Upper lobe of right lung (tissue), 1 donor: ENCODE measurements at regions of chr19 and their contacts with region 1.

Region 1: DNA sequence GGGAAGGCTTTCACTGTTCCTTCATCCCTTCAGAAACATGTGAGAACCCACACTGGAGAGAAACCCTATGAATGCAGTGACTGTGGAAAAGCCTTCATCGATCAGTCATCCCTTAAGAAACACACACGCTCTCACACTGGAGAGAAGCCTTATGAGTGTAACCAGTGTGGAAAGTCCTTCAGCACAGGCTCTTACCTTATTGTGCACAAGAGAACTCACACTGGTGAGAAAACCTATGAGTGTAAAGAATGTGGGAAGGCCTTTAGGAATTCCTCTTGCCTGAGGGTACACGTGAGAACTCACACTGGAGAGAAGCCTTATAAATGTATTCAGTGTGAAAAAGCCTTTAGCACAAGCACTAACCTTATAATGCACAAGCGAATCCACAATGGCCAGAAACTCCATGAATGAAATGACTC is 18.6 kb downstream of the ZNF177 start:
- DNase-seq: no peak
- ATAC-seq: no peak
- H3K4me3 ChIP-seq: no peak overlapping the region
- H3K27ac ChIP-seq: no peak overlapping the region
- H3K4me1 ChIP-seq: no peaks in the 10 kb centered on the region
- H3K27me3 ChIP-seq: no peaks in the 10 kb centered on the region
- CTCF ChIP-seq: no peak

Region 2: DNA sequence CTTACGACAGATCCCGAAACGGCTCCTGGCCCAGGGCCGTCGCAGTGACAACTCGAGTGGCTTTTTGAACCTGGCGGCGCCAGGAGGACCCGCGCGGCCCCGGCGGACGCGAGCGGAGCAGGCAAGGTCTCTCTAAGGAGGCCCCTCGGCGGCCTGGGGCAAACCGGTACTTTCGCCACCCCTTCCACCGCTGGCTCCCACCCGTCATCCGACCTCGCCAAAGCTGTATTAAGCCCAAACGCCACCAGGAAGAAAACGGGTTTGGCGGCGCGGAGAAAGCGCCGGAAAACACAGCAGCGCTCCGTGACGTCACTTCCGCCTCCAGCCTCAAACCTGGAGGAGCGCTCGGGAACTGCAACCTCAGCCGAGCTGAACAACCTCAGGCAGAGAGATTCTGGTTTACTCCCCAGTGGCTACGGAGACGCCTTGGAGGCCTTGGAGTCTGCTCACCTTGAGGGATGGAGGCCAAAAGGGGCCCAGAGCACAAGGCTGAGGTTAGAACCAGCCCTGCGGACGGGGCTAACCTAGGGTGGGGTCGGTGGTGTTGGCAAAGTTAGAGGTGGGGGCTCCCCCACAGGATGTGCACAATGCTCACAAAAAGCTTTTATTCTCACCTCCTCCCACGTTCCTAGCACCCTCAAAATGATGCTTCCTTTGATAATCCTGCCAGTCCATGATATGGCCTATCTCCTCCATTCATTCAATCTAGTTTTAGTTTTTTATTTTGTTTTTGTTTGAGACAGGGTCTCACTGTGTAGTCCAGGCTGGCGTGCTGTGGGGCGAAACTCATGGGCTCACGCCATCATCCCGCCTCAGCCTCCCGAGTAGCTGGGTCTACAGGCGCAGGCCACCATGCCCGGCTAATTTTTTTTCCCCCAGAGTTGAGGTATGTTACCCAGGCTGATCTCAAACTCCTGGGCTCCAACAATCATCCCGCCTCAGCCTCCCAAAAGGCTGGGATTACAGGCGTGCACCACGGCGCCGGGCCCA is 54.2 kb after region 1 on chr19 and contains the start of gene ZNF266:
- intact Hi-C with region 1: loop called (anchors 5 kb)
- DNase-seq: peak; percentile 94
- ATAC-seq: peak; percentile 96
- H3K4me3 ChIP-seq: peak within 1 kb of the TSS; percentile 81
- H3K27ac ChIP-seq: peak within 1 kb of the TSS; percentile 91
- H3K4me1 ChIP-seq: peaks cover 13% of the 10 kb centered on the region
- H3K27me3 ChIP-seq: no peaks in the 10 kb centered on the region
- CTCF ChIP-seq: peak; percentile 62
- total RNA-seq, gene ZNF266: 24.5 TPM